ENCODE measurements at regions of chr6 and their contacts with region 1.

Region 1: DNA sequence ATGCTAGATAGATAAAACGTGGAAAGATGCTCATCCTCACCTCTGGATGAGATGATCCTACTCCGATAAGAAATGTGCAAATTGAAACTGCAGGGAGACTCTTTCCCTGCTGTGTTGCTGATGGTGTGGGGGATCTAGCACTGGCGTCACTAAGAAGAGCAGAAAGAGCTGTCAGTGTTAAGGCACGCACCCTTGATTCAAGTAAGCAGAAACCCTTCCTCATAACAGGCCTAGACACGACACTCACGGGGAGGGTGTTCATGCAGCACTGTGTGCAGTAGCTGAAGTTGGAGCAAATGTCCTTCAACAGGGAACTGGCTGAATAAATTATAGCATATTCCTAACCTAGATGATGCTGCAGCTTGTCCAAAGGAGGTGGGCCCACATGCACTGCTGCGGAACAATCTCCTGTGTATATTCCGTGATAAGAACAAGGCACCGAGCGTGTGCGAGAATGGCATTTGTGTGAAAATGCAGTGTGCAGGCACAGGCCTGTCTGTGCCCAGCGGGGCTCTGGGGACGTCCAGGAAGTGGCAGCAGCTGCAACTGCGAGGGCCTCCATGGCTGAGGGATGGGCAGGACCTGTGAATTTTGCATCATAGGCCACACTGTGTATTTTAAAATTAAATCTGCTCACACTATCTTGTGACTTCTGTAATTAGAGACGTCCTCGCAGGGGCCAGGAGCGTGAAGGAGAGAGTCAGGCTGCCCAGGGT is 64.0 kb downstream of the TCP11 start:
- DNase-seq: peak; percentile 20
- ATAC-seq: no peak

Region 2: DNA sequence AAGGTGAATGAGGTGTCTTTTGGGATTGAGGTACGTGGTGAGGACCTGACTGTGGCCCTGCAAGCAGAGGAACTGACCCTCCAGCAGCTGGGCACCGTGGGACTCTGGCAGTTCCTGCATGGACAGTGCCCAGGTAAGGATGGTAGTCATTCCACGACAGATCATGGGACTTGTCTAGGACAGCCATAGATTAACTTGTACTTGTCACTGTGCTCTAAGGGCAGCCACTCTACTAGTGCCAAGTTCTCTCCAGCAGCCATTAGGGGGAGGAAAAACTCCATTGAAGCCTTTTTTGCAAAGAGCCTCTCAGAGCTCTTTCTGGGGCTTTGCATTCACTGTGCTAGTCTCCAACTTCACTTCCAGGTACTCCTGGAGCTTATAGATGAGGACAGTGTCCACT is 209.7 kb before region 1 on chr6:
- intact Hi-C with region 1: no loop called
- DNase-seq: no peak
- ATAC-seq: peak; percentile 55

Region 3: DNA sequence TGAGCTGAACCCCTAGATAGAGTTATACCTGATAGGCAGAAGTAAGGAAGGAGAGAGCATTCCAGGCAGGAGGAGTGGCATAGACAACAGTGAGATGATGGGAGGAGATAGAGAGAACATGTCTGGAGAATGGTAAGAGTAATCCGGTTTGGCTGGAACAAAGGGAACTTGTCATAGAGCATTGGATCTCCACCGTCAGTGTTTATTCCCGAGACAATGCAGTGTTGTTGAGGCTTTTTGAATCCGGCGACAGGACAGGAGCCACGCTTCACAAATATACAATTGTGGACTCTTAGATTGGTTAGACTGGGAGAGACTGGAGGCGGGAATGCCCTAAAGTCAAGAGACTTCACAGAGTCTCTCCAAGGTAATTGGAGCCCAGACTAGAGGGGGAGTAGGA is 68.3 kb before region 1 on chr6:
- intact Hi-C with region 1: loop called (anchors 10 kb)
- DNase-seq: no peak
- ATAC-seq: no peak